ENCODE measurements at regions of chr1 and their contacts with region 1.

Region 1: DNA sequence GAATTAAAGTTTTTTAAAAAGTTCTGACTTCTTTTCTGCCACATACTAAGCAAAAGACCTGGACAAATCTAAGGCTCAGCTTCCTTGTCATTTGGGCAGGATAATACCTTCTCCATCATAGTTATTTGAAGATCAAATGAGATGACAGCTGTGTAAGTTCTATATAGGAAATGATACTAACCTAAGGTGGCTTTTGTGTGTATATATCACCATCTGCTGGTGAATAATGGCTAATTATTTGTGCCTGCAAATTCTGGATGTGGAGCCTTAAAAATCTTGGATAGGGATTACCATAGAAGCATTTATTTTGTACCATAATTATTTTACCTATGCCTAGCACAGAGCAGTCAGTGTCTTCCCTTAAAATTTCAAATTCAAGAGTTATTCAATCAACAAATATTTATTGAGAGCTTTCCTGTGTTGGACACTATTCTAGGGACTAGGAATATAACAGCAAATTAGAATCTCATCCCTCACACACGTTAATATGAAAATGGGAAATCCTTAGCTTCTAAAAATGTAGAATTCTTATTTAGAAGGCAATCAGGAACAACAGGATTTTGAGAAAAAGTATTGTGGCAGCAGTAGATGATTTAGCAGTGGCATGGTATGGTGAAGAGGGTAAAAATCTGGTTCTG is 89.8 kb downstream of the TMEM200B start:
- DNase-seq: no peak
- H3K4me3 ChIP-seq: no peak overlapping the region
- H3K27ac ChIP-seq: no peak overlapping the region
- H3K4me1 ChIP-seq: no peaks in the 10 kb centered on the region
- H3K27me3 ChIP-seq: no peaks in the 10 kb centered on the region
- CTCF ChIP-seq: peak; percentile 56 to 69 (median 66)
- POLR2A ChIP-seq: no peak

Region 2: GRCh38 chr1:28885977-28886730 is 147.8 kb before region 1 on chr1:
- intact Hi-C with region 1: loop called (anchors 2 kb)
- DNase-seq: no peak
- H3K4me3 ChIP-seq: peak overlapping the region; percentile 70 to 73
- H3K27ac ChIP-seq: no peak overlapping the region
- H3K4me1 ChIP-seq: peaks cover 17% of the 10 kb centered on the region
- H3K27me3 ChIP-seq: no peaks in the 10 kb centered on the region
- CTCF ChIP-seq: no peak
- POLR2A ChIP-seq: no peak

Measured in testis (tissue), 5 donors.